Activated B cell treated with CpG ODN at 0.5 μM for 24 hours (primary cell): ENCODE measurements at regions of chr3 and their contacts with region 1.

Region 1: DNA sequence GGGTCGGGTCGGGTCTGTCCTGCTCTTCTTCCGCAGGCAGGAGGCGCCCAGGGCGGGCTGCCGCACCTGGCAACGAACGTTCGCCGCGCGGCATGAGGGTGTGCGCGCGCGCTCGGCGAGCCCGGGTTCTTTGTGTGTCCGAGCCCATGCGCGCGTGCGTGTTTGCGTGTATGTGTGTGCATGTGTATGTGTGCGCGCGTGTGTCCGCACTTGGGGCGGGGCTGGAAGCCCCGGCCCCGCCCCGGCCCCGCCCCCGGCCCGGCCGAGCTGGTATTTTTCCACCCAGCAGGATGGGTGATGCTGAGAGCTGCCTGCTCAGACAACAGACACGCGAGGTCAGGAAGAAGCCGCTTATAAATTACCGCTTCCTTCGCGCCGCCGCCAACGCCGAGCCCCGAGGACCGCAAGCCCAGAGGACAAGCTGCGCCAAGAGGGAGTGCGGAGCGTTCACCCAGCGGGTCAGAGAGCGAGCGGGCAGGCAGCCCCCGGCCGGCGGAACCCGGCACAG is at the start of gene SLC6A6:
- DNase-seq: peak; percentile 91
- ATAC-seq: peak; percentile 80
- H3K4me3 Mint-ChIP-seq: peak within 1 kb of the TSS; percentile 94
- H3K27ac Mint-ChIP-seq: peak within 1 kb of the TSS; percentile 95
- H3K4me1 Mint-ChIP-seq: peaks cover 62% of the 10 kb centered on the region
- H3K27me3 Mint-ChIP-seq: no peaks in the 10 kb centered on the region
- CTCF ChIP-seq: no peak
- total RNA-seq, gene SLC6A6: 67.2 and 67.3 TPM in 2 replicates

Region 2: DNA sequence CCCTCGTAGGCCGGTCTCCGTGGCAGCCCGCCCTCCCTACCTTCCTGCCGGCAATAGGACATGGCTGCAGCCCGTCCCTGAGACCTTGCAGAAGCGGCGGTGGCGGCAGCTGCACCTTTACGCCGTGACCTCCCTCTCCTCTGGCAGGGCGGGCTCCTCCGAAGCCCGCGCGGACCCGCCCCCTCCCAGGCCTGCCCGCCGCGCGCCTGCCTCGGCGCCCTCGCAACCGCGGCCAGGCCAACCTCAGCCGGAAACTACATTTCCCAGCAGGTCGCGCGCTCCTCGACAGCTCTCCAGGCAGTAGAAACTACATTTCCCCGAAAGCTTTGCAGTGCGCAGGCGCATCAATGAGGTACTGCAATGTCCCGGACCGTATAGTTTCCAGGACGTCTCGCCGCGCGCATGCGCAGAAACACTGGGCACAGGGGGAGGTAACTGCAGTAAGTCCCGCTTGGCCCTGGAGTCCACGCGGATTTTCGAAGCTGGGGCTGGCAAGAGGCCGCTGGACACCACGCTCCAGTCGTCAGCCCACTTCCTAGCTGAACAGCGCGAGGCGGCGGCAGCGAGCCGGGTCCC is 277.7 kb before region 1 on chr3 and contains the starts of genes CHCHD4 and TMEM43:
- CTCF ChIA-PET with region 1: no interaction called
- POLR2A ChIA-PET with region 1: no interaction called
- intact Hi-C with region 1: loop called (anchors 1 kb)
- DNase-seq: peak; percentile 92
- ATAC-seq: peak; percentile 86
- H3K4me3 Mint-ChIP-seq: peak within 1 kb of the TSS; percentile 94
- H3K27ac Mint-ChIP-seq: peak within 1 kb of the TSS; percentile 87
- H3K4me1 Mint-ChIP-seq: peaks cover 40% of the 10 kb centered on the region
- H3K27me3 Mint-ChIP-seq: no peaks in the 10 kb centered on the region
- CTCF ChIP-seq: no peak
- total RNA-seq, gene CHCHD4: 9.2 and 9.8 TPM in 2 replicates
- total RNA-seq, gene TMEM43: 30.7 and 32.3 TPM in 2 replicates

Region 3: DNA sequence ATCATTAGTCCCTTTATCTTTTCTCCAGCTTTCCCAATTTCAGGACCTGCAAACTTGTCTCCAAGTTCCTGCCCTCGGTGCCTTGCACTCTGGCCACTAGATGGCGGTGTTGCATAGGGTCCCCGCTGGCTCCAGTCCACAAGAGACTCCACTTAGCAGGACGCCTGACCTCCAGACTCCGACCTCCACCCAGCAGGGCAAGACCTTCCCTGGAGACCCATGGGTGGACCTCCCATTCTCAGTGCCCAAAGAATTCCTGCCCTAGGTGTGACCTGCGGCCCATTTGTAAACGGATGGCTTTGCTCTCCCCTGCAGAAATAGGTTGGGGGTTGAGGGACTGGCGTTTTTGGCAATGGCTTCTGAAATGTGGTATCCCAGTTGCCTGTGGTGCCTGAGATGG is 141.1 kb before region 1 on chr3:
- CTCF ChIA-PET with region 1: interaction called, 8 read pairs
- POLR2A ChIA-PET with region 1: interaction called, 15 read pairs
- intact Hi-C with region 1: loop called (anchors 1 kb)
- DNase-seq: peak; percentile 67
- ATAC-seq: peak; percentile 58
- H3K4me3 Mint-ChIP-seq: no peak overlapping the region
- H3K27ac Mint-ChIP-seq: no peak overlapping the region
- H3K4me1 Mint-ChIP-seq: no peaks in the 10 kb centered on the region
- H3K27me3 Mint-ChIP-seq: peaks cover 10% of the 10 kb centered on the region
- CTCF ChIP-seq: peak; percentile 68

Region 4: GRCh38 chr3:14424711-14425341 is 22.5 kb after region 1 on chr3:
- CTCF ChIA-PET with region 1: interaction called, 4 read pairs
- POLR2A ChIA-PET with region 1: interaction called, 377 read pairs
- intact Hi-C with region 1: loop called (anchors 1 kb)
- DNase-seq: no peak
- ATAC-seq: peak; percentile 15
- H3K4me3 Mint-ChIP-seq: peak overlapping the region; percentile 81
- H3K27ac Mint-ChIP-seq: peak overlapping the region; percentile 94
- H3K4me1 Mint-ChIP-seq: peaks cover 82% of the 10 kb centered on the region
- H3K27me3 Mint-ChIP-seq: no peaks in the 10 kb centered on the region
- CTCF ChIP-seq: no peak

Region 5: DNA sequence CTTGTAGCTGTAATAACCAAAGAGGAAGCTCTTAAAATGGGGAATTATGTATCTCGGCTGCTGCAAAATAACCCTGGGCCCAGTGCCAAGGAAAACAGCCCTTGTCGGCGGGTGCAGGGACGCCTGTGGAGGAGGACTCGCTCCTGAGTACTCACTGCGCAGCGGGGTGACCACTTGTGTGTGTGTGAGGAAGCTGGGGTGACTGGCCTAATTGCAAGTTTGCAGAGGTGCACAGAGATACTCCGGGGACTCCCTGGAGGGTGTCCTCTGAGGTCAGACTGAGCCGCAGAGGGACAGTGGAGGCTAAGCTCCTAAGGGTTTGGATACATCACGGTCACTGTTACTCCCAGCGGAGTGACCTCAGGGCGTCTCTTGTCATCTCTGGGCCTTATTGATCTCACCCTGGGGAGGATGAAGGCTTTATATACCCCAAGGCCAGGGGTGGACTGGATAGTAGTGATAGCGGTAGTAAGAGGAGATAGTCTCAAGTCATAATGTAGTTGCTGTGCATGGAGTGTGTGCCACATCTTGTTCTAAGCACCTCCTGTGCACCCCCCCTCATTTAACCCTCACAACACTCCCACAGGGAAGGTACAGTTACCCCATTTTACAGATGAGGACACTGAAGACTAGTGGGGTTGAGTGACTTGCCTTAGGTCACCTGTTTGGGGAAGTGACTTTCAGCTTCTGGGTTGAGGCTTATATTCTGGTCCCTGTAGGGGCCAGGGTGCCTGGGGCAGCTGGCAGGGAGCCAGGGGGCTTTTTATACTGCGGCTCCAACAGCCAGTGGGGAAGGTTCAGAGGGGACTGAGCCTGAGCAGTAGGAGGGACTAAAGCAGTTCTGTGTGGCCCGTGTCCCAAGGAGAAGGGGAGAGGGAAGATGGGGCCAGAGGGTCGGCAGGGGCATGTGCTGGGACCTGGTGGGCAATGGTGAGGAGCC is 37.5 kb after region 1 on chr3:
- CTCF ChIA-PET with region 1: interaction called, 3 read pairs
- POLR2A ChIA-PET with region 1: interaction called, 377 read pairs
- intact Hi-C with region 1: no loop called
- DNase-seq: no peak
- ATAC-seq: peak; percentile 60
- H3K4me3 Mint-ChIP-seq: peak overlapping the region; percentile 64
- H3K27ac Mint-ChIP-seq: peak overlapping the region; percentile 70
- H3K4me1 Mint-ChIP-seq: peaks cover 45% of the 10 kb centered on the region
- H3K27me3 Mint-ChIP-seq: no peaks in the 10 kb centered on the region
- CTCF ChIP-seq: no peak

Region 6: GRCh38 chr3:14467814-14468620 is 65.7 kb after region 1 on chr3:
- CTCF ChIA-PET with region 1: interaction called, 15 read pairs
- POLR2A ChIA-PET with region 1: interaction called, 6 read pairs
- intact Hi-C with region 1: loop called (anchors 1 kb)
- DNase-seq: peak; percentile 40
- ATAC-seq: peak; percentile 68
- H3K4me3 Mint-ChIP-seq: no peak overlapping the region
- H3K27ac Mint-ChIP-seq: no peak overlapping the region
- H3K4me1 Mint-ChIP-seq: peaks cover 7% of the 10 kb centered on the region
- H3K27me3 Mint-ChIP-seq: no peaks in the 10 kb centered on the region
- CTCF ChIP-seq: peak; percentile 60

Region 7: GRCh38 chr3:15064835-15065549 is 662.6 kb after region 1 on chr3 and contains the start of gene MRPS25:
- CTCF ChIA-PET with region 1: no interaction called
- POLR2A ChIA-PET with region 1: no interaction called
- intact Hi-C with region 1: loop called (anchors 1 kb)
- DNase-seq: peak; percentile 84
- ATAC-seq: peak; percentile 97
- H3K4me3 Mint-ChIP-seq: peak within 1 kb of the TSS; percentile 98
- H3K27ac Mint-ChIP-seq: peak within 1 kb of the TSS; percentile 95
- H3K4me1 Mint-ChIP-seq: peaks cover 25% of the 10 kb centered on the region
- H3K27me3 Mint-ChIP-seq: no peaks in the 10 kb centered on the region
- CTCF ChIP-seq: no peak
- total RNA-seq, gene MRPS25: 72.4 and 85.9 TPM in 2 replicates